T-cell (primary cell): ENCODE measurements at regions of chr6 and their contacts with region 1.

Region 1: GRCh38 chr6:163419413-163420288 is 5.1 kb downstream of the QKI start:
- DNase-seq: no peak
- ATAC-seq: no peak
- H3K4me3 ChIP-seq: no peak overlapping the region
- H3K4me3 Mint-ChIP-seq: peak overlapping the region in 1 of 3 donors; percentile 22
- H3K27ac ChIP-seq: no peak overlapping the region
- H3K27ac Mint-ChIP-seq: no peak overlapping the region
- H3K4me1 ChIP-seq: peaks cover 2 to 23% of the 10 kb centered on the region in 2 experiments
- H3K4me1 Mint-ChIP-seq: peaks cover 51 to 74% (median 58%) of the 10 kb centered on the region in 3 donors
- H3K27me3 ChIP-seq: no peaks in the 10 kb centered on the region
- H3K27me3 Mint-ChIP-seq: no peaks in the 10 kb centered on the region

Region 2: DNA sequence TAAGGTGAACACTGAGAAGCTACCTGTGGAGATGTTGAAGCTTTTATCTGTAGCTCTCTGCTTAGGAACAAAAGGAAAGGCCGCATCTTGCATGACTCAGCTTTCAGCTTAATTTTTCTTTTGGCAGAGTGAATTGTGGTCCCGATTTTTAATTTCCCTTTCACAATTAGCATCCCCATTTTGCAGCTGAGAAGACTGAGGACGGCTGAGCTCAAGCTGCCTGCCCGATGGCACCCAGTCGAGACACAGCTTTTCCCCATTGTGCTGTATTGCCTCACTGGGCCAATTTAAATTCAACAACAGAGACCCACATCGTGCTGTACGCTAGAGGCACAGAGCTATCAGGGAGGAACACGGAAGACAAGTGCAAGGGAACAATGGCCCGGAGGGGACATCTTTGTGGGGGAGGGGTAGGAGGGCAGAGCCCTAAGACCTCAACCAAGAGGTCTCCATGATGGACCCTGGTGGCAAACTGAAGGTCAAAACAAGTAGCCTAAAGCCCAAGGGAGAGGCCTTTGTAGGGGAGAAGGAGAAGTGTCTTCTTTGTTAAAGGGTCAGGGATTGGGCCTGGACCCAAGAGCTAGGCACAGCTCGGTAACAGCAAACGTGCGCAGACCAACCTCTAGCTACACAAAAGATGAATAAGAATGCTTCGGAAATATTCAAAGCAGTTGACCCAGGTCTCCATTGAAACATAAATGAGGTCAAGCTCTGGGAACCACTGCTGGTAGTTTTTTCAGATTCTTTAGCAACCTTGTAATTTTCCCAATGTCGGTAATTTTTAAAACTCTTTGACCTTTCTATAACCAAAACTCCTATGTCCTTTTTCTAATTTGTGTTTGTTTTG is 18.4 kb before region 1 on chr6:
- CTCF ChIA-PET with region 1: no interaction called
- POLR2A ChIA-PET with region 1: interaction called in 1 of 2 experiments, 12 read pairs
- DNase-seq: no peak
- ATAC-seq: no peak
- H3K4me3 ChIP-seq: no peak overlapping the region
- H3K4me3 Mint-ChIP-seq: no peak overlapping the region
- H3K27ac ChIP-seq: no peak overlapping the region
- H3K27ac Mint-ChIP-seq: no peak overlapping the region
- H3K4me1 ChIP-seq: peaks cover 0 to 14% of the 10 kb centered on the region in 2 experiments
- H3K4me1 Mint-ChIP-seq: peaks cover 9 to 20% (median 18%) of the 10 kb centered on the region in 3 donors
- H3K27me3 ChIP-seq: peaks cover 2 to 13% of the 10 kb centered on the region in 2 experiments
- H3K27me3 Mint-ChIP-seq: peaks cover 4 to 12% of the 10 kb centered on the region in 2 donors

Region 3: DNA sequence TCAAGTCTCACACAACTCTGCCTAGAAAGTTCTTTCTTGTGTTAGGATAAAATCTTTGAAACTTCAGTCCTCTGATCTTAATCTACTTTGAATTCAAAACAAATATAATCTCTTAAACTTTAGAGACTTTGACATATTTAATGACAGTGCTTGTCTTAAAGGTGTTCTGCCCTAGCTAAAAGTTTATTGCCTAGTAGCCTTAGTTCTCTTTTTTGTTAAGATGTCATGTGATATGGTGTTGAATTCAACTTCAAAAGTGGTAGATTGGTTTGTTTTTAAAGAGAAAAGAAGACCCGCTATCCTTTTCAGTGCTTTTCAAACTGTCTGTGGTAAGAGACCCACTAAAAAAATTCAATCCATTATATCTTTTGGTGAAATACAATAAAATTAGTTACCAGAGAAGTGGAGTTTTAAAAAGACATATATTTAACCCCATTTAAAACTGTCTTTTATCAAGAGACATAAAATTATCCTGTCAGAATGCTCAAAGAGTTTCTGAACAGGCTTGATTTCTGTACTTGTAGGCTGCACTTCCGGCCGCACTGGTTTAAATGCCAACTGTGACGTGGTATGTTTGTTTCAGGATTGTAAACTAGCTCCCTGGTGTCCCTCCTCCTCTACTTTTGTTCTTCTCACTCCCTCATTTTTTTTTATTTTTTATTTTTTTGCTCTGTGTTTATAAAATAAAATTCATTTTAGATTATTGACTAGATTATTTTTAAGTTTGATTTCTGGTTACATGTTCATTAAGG is 71.4 kb after region 1 on chr6:
- CTCF ChIA-PET with region 1: no interaction called
- POLR2A ChIA-PET with region 1: no interaction called
- DNase-seq: peak in 18 of 35 experiments; percentile 2 to 33 (median 11)
- ATAC-seq: peak in 2 of 4 experiments; percentile 66 to 68
- H3K4me3 ChIP-seq: no peak overlapping the region
- H3K4me3 Mint-ChIP-seq: peak overlapping the region; percentile 3 to 54 (median 43)
- H3K27ac ChIP-seq: peak overlapping the region; percentile 35
- H3K27ac Mint-ChIP-seq: peak overlapping the region; percentile 70 to 79
- H3K4me1 ChIP-seq: peaks cover 0 to 15% of the 10 kb centered on the region in 2 experiments
- H3K4me1 Mint-ChIP-seq: peaks cover 56 to 65% (median 57%) of the 10 kb centered on the region in 3 donors
- H3K27me3 ChIP-seq: no peaks in the 10 kb centered on the region
- H3K27me3 Mint-ChIP-seq: no peaks in the 10 kb centered on the region

Region 4: DNA sequence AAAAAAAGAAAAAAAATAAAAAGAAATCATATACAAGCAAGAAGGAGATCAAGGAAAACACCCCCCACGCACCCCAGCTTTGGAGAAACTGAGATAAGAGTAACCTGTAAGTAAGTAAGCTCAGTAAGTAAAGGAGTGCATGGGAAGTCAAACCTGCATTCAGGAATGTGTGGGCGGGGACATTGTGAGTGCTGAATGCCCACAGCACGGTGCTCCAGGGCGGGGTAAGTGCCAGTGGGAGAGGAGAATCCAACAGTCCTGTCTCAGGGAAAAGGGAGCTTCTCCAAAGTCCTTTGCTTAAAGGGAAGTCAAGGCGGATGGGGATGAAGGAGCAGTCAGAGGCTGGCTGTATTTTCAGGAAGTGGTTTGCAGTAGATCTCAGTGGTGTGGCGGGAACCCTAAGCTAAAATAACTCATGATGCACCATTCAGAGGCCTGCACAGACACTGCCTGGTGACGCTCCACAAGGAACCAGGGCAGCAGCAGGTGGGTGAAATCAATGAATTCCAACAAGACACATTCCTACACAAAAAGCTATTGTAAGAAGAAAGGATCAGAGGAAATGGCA is 362.9 kb after region 1 on chr6:
- CTCF ChIA-PET with region 1: no interaction called
- POLR2A ChIA-PET with region 1: no interaction called
- DNase-seq: no peak
- ATAC-seq: no peak
- H3K4me3 ChIP-seq: no peak overlapping the region
- H3K4me3 Mint-ChIP-seq: no peak overlapping the region
- H3K27ac ChIP-seq: no peak overlapping the region
- H3K27ac Mint-ChIP-seq: no peak overlapping the region
- H3K4me1 ChIP-seq: peaks cover 0 to 5% of the 10 kb centered on the region in 2 experiments
- H3K4me1 Mint-ChIP-seq: peaks cover 0 to 7% (median 2%) of the 10 kb centered on the region in 3 donors
- H3K27me3 ChIP-seq: peaks cover 0 to 3% of the 10 kb centered on the region in 2 experiments
- H3K27me3 Mint-ChIP-seq: peaks cover 7 to 12% of the 10 kb centered on the region in 2 donors